ENCODE measurements at regions of chr4 and their contacts with region 1.

Region 1: DNA sequence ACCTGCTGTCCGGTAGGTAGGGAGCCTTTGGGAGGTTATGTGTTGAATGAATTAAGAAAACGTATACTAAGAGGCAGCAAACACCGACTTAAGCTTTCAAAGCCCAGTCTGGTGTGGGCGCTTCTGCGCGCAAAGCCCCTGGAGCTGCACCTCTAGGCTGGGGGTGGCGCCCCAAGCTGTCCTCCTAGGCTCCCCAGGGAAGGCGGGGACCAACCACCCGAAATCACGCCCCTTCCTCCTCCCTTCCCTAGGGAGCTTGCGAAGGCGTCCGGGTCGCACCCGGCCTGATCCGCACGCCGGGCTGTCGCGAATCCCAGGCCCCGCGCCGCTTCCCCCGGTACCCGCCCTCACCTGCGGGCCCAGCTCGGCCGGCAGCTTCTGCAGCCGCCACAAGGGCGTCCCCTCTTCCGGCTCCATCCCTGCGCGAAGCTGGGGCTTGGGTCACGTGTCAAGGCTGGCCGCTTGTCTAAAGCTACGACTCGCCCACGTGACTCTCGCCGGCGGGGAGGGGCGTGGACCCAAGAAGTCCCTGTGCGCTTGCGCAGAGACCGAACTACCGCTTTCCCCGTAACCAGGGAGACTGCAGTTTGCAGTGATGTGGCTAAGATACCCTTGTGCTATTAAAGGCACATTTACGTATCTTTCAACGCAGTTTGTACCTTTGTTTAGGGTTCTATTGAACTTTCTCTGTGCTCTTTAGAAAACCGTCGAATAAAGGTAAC is at the start of gene COMMD8:
- DNase-seq: peak; percentile 96
- H3K4me3 Mint-ChIP-seq: peak within 1 kb of the TSS; percentile 86
- H3K27ac Mint-ChIP-seq: peak within 1 kb of the TSS; percentile 53
- H3K4me1 Mint-ChIP-seq: peaks cover 32% of the 10 kb centered on the region
- H3K27me3 Mint-ChIP-seq: no peaks in the 10 kb centered on the region
- total RNA-seq, gene COMMD8: 15.8 and 15.9 TPM in 2 replicates

Region 2: GRCh38 chr4:47213971-47214370 is 249.4 kb before region 1 on chr4:
- intact Hi-C with region 1: no loop called
- DNase-seq: no peak
- H3K4me3 Mint-ChIP-seq: no peak overlapping the region
- H3K27ac Mint-ChIP-seq: no peak overlapping the region
- H3K4me1 Mint-ChIP-seq: no peaks in the 10 kb centered on the region
- H3K27me3 Mint-ChIP-seq: no peaks in the 10 kb centered on the region

Region 3: DNA sequence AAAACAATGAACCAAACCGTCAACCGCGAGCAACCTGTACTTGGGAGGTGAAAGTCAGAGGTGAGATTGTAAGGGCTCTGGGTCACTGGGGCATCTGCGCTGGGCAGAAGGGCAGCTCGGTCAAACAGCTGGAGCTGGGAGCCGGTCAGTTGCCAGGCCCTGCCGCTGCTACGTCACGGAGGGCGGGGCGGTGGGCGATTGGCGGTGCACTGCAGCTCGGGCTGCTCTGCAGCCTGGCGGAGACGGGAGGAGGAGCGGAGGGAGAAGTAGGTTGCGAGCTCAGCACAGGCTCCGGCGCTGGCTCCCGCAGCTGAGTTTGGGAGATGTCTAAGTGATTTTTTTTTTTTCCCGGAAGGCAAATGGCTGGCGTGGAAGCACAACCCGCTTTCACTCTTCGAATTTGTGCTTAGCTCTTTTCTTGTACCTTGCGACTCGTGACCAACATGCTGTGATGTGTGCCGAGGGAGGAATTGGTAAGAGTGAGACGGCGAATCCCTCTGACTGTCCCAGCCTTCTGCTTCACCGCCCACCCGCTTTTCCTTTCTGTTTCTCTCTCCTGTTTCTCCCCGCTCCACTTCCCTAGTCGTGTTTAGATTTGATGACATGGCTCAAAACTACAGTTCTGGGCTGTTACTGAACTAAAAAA is 21.8 kb after region 1 on chr4 and contains the start of gene ATP10D:
- intact Hi-C with region 1: loop called (anchors 1 kb)
- DNase-seq: peak; percentile 72
- H3K4me3 Mint-ChIP-seq: peak within 1 kb of the TSS; percentile 92
- H3K27ac Mint-ChIP-seq: peak within 1 kb of the TSS; percentile 51
- H3K4me1 Mint-ChIP-seq: peaks cover 27% of the 10 kb centered on the region
- H3K27me3 Mint-ChIP-seq: peaks cover 9% of the 10 kb centered on the region
- total RNA-seq, gene ATP10D: 1.6 and 1.9 TPM in 2 replicates

Region 4: GRCh38 chr4:47531241-47531953 is 68.0 kb after region 1 on chr4:
- intact Hi-C with region 1: loop called (anchors 2 kb)
- DNase-seq: peak; percentile 70
- H3K4me3 Mint-ChIP-seq: peak overlapping the region; percentile 0
- H3K27ac Mint-ChIP-seq: peak overlapping the region; percentile 21
- H3K4me1 Mint-ChIP-seq: peaks cover 48% of the 10 kb centered on the region
- H3K27me3 Mint-ChIP-seq: no peaks in the 10 kb centered on the region

Region 5: DNA sequence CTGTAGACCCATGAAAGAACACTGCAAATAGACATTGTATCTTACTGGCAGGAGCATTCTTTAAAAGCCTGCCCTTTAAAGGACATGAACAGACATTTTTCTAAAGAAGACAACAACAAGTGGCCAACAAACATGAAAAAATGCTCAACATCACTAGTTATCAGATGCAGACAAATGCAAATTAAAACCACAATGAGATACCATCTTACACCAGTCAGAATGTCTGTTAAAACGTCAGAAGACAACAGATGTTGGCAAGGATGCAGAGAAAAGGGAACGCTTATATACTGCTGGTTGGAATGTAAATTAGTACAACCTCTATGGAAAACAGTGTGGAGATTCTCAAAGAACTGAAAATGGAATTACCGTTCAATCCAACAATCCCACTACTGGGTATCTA is 98.9 kb after region 1 on chr4:
- intact Hi-C with region 1: loop called (anchors 1 kb)
- DNase-seq: no peak
- H3K4me3 Mint-ChIP-seq: no peak overlapping the region
- H3K27ac Mint-ChIP-seq: no peak overlapping the region
- H3K4me1 Mint-ChIP-seq: peaks cover 4% of the 10 kb centered on the region
- H3K27me3 Mint-ChIP-seq: no peaks in the 10 kb centered on the region

Region 6: GRCh38 chr4:47836641-47837093 is 373.3 kb after region 1 on chr4:
- intact Hi-C with region 1: loop called (anchors 10 kb)
- DNase-seq: peak; percentile 29
- H3K4me3 Mint-ChIP-seq: peak overlapping the region; percentile 80
- H3K27ac Mint-ChIP-seq: no peak overlapping the region
- H3K4me1 Mint-ChIP-seq: peaks cover 28% of the 10 kb centered on the region
- H3K27me3 Mint-ChIP-seq: peaks cover 47% of the 10 kb centered on the region

Region 7: DNA sequence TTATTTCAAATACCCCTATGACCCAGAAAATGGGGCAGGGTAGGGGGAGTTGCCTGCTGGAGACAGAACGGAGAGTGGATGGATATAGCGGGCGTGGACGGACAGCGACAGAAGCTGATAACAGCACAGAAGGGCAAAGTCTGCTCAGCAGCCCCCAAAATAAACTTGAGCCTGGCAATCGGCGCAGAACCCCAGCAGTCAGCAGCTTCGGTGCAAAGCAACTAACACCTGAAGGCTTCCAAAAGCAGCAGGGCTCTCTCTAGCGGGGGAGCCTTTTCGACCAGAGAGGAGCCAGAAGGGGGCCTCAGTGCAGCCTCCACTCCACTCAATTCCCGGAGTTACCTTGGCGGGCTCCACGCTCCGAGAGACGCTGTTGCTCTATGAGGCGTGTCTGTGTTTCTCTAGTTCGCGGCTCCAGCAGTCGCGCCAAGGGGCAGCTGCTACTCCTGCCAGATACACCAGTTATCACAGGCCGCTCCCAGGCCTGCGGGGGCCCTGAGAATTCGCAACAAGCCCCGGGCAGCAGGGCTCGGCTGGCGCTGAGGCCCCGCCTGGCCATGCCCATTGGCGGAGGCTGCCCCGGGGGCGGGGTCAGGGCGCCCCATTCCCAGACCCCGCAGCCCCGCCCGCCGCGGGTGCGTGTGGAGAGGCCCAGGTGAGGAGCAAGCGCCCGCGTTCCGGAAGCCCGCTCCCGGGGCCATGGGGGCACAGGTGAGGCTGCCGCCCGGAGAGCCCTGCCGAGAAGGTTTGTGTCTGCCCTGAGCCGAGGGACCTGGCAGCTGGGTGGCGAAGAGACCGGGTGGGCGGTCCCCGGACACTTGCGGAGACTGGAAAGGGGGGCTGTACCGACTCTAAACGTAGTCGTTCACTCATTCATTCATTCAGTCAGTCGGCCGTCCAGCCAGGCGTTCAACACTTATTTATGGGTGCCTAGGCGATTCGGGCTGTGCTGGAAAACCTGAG is 553.0 kb after region 1 on chr4 and contains the starts of genes CNGA1 and NIPAL1:
- intact Hi-C with region 1: loop called (anchors 10 kb)
- DNase-seq: peak; percentile 51
- H3K4me3 Mint-ChIP-seq: peak within 1 kb of the TSS; percentile 80
- H3K27ac Mint-ChIP-seq: peak within 1 kb of the TSS; percentile 48
- H3K4me1 Mint-ChIP-seq: peaks cover 12% of the 10 kb centered on the region
- H3K27me3 Mint-ChIP-seq: peaks cover 28% of the 10 kb centered on the region
- total RNA-seq, gene CNGA1: not detected in 2 replicates
- total RNA-seq, gene NIPAL1: 2.0 and 2.5 TPM in 2 replicates

Region 8: GRCh38 chr4:48340965-48341775 is 877.8 kb after region 1 on chr4 and contains the start of gene SLAIN2:
- intact Hi-C with region 1: loop called (anchors 1 kb)
- DNase-seq: peak; percentile 98
- H3K4me3 Mint-ChIP-seq: peak within 1 kb of the TSS; percentile 98
- H3K27ac Mint-ChIP-seq: peak within 1 kb of the TSS; percentile 98
- H3K4me1 Mint-ChIP-seq: peaks cover 74% of the 10 kb centered on the region
- H3K27me3 Mint-ChIP-seq: no peaks in the 10 kb centered on the region
- total RNA-seq, gene SLAIN2: 71.4 and 79.4 TPM in 2 replicates